ENCODE measurements at regions of chr3 and their contacts with region 1.

Region 1: GRCh38 chr3:28651159-28651558 is 302.5 kb upstream of the AZI2 start:
- DNase-seq: no peak
- ATAC-seq: peak; percentile 86 to 99 (median 92)
- H3K4me3 ChIP-seq: no peak overlapping the region
- H3K27ac ChIP-seq: no peak overlapping the region
- H3K4me1 ChIP-seq: no peaks in the 10 kb centered on the region
- H3K27me3 ChIP-seq: no peaks in the 10 kb centered on the region
- CTCF ChIP-seq: no peak

Region 2: GRCh38 chr3:28791713-28792255 is 140.6 kb after region 1 on chr3:
- intact Hi-C with region 1: no loop called
- DNase-seq: no peak
- ATAC-seq: peak; percentile 51 to 85 (median 80)
- H3K4me3 ChIP-seq: no peak overlapping the region
- H3K27ac ChIP-seq: peak overlapping the region; percentile 24
- H3K4me1 ChIP-seq: no peaks in the 10 kb centered on the region
- H3K27me3 ChIP-seq: no peaks in the 10 kb centered on the region
- CTCF ChIP-seq: no peak

Region 3: GRCh38 chr3:28840976-28841376 is 189.8 kb after region 1 on chr3:
- intact Hi-C with region 1: loop called in 1 of 2 experiments (anchors 10 kb)
- DNase-seq: no peak
- ATAC-seq: no peak
- H3K4me3 ChIP-seq: no peak overlapping the region
- H3K27ac ChIP-seq: no peak overlapping the region
- H3K4me1 ChIP-seq: peaks cover 4% of the 10 kb centered on the region
- H3K27me3 ChIP-seq: no peaks in the 10 kb centered on the region
- CTCF ChIP-seq: no peak